Activated B cell treated with CpG ODN at 0.5 μM for 24 hours (primary cell): ENCODE measurements at regions of chr11 and their contacts with region 1.

Region 1: GRCh38 chr11:123478352-123478987 is 48.4 kb downstream of the GRAMD1B start:
- DNase-seq: no peak
- ATAC-seq: no peak
- H3K4me3 Mint-ChIP-seq: peak overlapping the region; percentile 47
- H3K27ac Mint-ChIP-seq: peak overlapping the region; percentile 85
- H3K4me1 Mint-ChIP-seq: peaks cover 55% of the 10 kb centered on the region
- H3K27me3 Mint-ChIP-seq: no peaks in the 10 kb centered on the region
- CTCF ChIP-seq: peak; percentile 29

Region 2: GRCh38 chr11:123062158-123062891 is 416.1 kb before region 1 on chr11:
- CTCF ChIA-PET with region 1: no interaction called
- POLR2A ChIA-PET with region 1: interaction called, 3 read pairs
- intact Hi-C with region 1: loop called (anchors 2 kb)
- DNase-seq: peak; percentile 98
- ATAC-seq: peak; percentile 82
- H3K4me3 Mint-ChIP-seq: peak overlapping the region; percentile 97
- H3K27ac Mint-ChIP-seq: peak overlapping the region; percentile 100
- H3K4me1 Mint-ChIP-seq: peaks cover 69% of the 10 kb centered on the region
- H3K27me3 Mint-ChIP-seq: no peaks in the 10 kb centered on the region
- CTCF ChIP-seq: no peak

Region 3: DNA sequence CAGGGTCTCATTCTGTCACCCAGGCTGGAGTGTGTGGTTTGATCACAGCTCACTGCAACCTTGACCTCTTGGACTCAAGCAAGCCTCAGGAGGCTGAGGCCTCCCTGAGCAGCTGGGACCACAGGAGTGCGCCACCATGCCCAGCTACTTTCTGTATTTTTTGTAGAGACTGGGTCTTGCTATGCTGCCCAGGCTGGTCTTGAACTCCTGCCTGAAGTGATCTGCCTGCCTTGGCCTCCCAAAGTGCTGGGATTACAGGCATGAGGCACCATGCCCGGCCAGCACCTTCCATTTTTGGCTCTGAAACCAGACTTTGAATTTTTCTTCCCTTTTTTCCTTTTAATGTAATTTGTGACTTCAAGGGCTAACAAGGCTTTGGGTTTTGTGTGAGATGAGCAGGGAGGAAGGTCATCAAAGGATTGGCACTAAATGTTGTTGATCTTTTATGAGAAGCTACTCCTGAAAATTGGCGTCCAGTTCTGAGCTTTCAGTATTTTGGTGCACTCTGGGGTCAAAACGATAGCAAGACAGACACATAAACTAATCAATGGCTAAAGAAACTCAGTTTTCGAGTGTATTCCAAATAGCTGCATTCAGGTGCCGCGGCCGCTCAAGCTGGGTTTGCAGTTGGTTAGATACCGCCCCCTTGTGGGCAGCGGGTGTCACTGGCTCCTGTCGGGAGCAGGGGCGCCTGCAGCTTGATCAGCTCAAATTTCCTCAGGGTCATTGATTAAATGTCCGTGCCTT is 231.5 kb before region 1 on chr11:
- CTCF ChIA-PET with region 1: interaction called, 14 read pairs
- POLR2A ChIA-PET with region 1: interaction called, 3 read pairs
- intact Hi-C with region 1: loop called (anchors 1 kb)
- DNase-seq: peak; percentile 45
- ATAC-seq: peak; percentile 75
- H3K4me3 Mint-ChIP-seq: no peak overlapping the region
- H3K27ac Mint-ChIP-seq: no peak overlapping the region
- H3K4me1 Mint-ChIP-seq: peaks cover 5% of the 10 kb centered on the region
- H3K27me3 Mint-ChIP-seq: peaks cover 14% of the 10 kb centered on the region
- CTCF ChIP-seq: peak; percentile 85

Region 4: GRCh38 chr11:123407130-123407995 is 71.1 kb before region 1 on chr11:
- CTCF ChIA-PET with region 1: interaction called, 82 read pairs
- POLR2A ChIA-PET with region 1: interaction called, 3 read pairs
- intact Hi-C with region 1: loop called (anchors 1 kb)
- DNase-seq: no peak
- ATAC-seq: peak; percentile 56
- H3K4me3 Mint-ChIP-seq: no peak overlapping the region
- H3K27ac Mint-ChIP-seq: no peak overlapping the region
- H3K4me1 Mint-ChIP-seq: peaks cover 6% of the 10 kb centered on the region
- H3K27me3 Mint-ChIP-seq: peaks cover 4% of the 10 kb centered on the region
- CTCF ChIP-seq: no peak

Region 5: GRCh38 chr11:123519055-123519796 is 40.8 kb after region 1 on chr11:
- CTCF ChIA-PET with region 1: interaction called, 4 read pairs
- POLR2A ChIA-PET with region 1: interaction called, 4 read pairs
- intact Hi-C with region 1: loop called (anchors 5 kb)
- DNase-seq: no peak
- ATAC-seq: no peak
- H3K4me3 Mint-ChIP-seq: no peak overlapping the region
- H3K27ac Mint-ChIP-seq: no peak overlapping the region
- H3K4me1 Mint-ChIP-seq: peaks cover 29% of the 10 kb centered on the region
- H3K27me3 Mint-ChIP-seq: no peaks in the 10 kb centered on the region
- CTCF ChIP-seq: no peak

Region 6: DNA sequence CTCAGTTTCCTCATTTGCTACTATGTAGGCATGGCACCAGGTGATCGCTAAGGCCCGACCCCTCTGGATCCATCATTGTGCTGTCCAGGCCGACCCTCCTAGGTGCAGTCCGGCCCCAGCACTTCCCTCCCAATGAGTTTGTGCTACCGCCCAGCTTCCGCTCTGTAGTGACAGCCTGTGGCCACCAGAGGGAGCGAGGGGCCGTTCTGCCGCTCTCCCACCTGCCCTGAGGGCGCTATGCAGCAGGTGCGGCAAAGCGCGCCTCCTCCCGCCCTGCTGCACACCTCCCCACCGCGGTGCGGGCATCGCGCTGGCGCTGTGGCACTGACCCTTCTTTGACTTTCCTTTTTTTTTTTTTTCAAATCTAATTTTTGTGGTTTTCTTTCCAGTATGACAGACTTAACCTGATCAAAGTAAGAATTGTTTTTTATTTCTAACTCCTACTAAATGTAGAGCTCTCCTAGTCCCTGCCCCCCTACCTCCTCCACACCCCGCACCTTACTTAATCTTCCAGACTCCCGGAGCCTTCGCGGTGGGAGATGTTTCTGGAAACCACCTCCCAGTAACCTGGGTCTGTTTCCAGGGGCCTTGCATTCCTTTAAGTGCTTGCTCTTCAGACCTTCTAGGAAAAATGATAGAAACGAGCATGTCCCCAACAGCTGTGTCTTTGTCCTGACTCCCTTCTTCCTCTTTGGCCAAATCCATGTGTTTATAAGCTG is 102.2 kb after region 1 on chr11:
- CTCF ChIA-PET with region 1: interaction called, 10 read pairs
- POLR2A ChIA-PET with region 1: interaction called, 3 read pairs
- intact Hi-C with region 1: no loop called
- DNase-seq: peak; percentile 48
- ATAC-seq: peak; percentile 89
- H3K4me3 Mint-ChIP-seq: no peak overlapping the region
- H3K27ac Mint-ChIP-seq: peak overlapping the region; percentile 27
- H3K4me1 Mint-ChIP-seq: peaks cover 22% of the 10 kb centered on the region
- H3K27me3 Mint-ChIP-seq: no peaks in the 10 kb centered on the region
- CTCF ChIP-seq: no peak

Region 7: GRCh38 chr11:123659311-123659710 is 180.8 kb after region 1 on chr11:
- CTCF ChIA-PET with region 1: no interaction called
- POLR2A ChIA-PET with region 1: no interaction called
- intact Hi-C with region 1: no loop called
- DNase-seq: no peak
- ATAC-seq: no peak
- H3K4me3 Mint-ChIP-seq: no peak overlapping the region
- H3K27ac Mint-ChIP-seq: no peak overlapping the region
- H3K4me1 Mint-ChIP-seq: peaks cover 28% of the 10 kb centered on the region
- H3K27me3 Mint-ChIP-seq: peaks cover 13% of the 10 kb centered on the region
- CTCF ChIP-seq: no peak